B cell (primary cell): ENCODE measurements at regions of chr15 and their contacts with region 1.

Region 1: DNA sequence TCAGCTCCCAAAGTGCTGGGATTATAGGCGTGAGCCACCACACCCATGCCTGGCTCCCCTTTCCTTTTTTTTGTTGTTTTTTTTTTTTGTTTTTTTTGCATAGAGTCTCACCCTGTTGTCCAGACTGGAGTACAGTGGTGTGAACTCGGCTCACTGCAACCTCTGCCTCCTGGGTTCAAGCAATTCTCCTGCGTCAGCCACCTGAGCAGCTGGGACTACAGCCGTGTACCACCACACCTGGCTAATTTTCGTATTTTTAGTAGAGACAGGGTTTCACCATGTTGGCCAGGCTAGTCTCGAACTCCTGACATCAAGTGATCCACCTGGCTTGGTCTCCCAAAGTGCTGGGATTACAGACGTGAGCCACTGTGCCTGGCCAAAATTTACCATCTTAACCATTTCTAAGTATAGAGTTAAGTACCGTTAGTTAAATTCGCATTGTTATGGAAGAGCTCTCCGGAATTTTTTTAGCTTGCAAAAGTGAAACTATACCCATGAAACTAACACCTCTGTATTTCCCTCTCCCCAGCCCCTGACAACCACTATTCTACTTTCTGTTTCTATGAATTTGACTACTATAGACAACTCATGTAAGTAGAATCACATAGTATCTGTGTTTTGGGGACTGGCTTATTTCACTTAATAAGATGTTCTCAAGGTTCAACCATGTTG is 70.9 kb upstream of the C15orf39 start:
- DNase-seq: peak; percentile 70
- ATAC-seq: peak; percentile 93
- H3K4me3 ChIP-seq: peak overlapping the region in 4 of 5 experiments; percentile 16 to 51 (median 40)
- H3K4me3 Mint-ChIP-seq: peak overlapping the region; percentile 73
- H3K27ac ChIP-seq: no peak overlapping the region
- H3K27ac Mint-ChIP-seq: peak overlapping the region; percentile 27
- H3K4me1 ChIP-seq: peaks cover 11 to 18% of the 10 kb centered on the region in 2 donors
- H3K4me1 Mint-ChIP-seq: peaks cover 17% of the 10 kb centered on the region
- H3K27me3 ChIP-seq: no peaks in the 10 kb centered on the region
- H3K27me3 Mint-ChIP-seq: no peaks in the 10 kb centered on the region
- CTCF ChIP-seq: no peak

Region 2: GRCh38 chr15:75104804-75105535 is 25.8 kb before region 1 on chr15:
- CTCF ChIA-PET with region 1: interaction called, 4 read pairs
- POLR2A ChIA-PET with region 1: interaction called, 9 read pairs
- intact Hi-C with region 1: loop called (anchors 2 kb)
- DNase-seq: peak; percentile 44
- ATAC-seq: peak; percentile 37
- H3K4me3 ChIP-seq: no peak overlapping the region
- H3K4me3 Mint-ChIP-seq: peak overlapping the region; percentile 66
- H3K27ac ChIP-seq: peak overlapping the region; percentile 5 to 10
- H3K27ac Mint-ChIP-seq: peak overlapping the region; percentile 92
- H3K4me1 ChIP-seq: peaks cover 37 to 45% of the 10 kb centered on the region in 2 donors
- H3K4me1 Mint-ChIP-seq: peaks cover 40% of the 10 kb centered on the region
- H3K27me3 ChIP-seq: peaks cover 0 to 11% (median 4%) of the 10 kb centered on the region in 4 experiments
- H3K27me3 Mint-ChIP-seq: peaks cover 23% of the 10 kb centered on the region
- CTCF ChIP-seq: no peak

Region 3: GRCh38 chr15:75801859-75802593 is 671.3 kb after region 1 on chr15:
- CTCF ChIA-PET with region 1: no interaction called
- POLR2A ChIA-PET with region 1: no interaction called
- intact Hi-C with region 1: no loop called
- DNase-seq: peak; percentile 86
- ATAC-seq: peak; percentile 100
- H3K4me3 ChIP-seq: peak overlapping the region in 2 of 5 experiments; percentile 23 to 37
- H3K4me3 Mint-ChIP-seq: peak overlapping the region; percentile 55
- H3K27ac ChIP-seq: no peak overlapping the region
- H3K27ac Mint-ChIP-seq: no peak overlapping the region
- H3K4me1 ChIP-seq: peaks cover 4 to 8% of the 10 kb centered on the region in 2 donors
- H3K4me1 Mint-ChIP-seq: peaks cover 6% of the 10 kb centered on the region
- H3K27me3 ChIP-seq: peaks cover 0 to 18% (median 9%) of the 10 kb centered on the region in 4 experiments
- H3K27me3 Mint-ChIP-seq: peaks cover 55% of the 10 kb centered on the region
- CTCF ChIP-seq: peak; percentile 93